K562 (cell line): ENCODE measurements at regions of chr4 and their contacts with region 1.

Region 1: GRCh38 chr4:138680989-138681604 is 334.5 kb upstream of the NOCT start:
- DNase-seq: peak; percentile 61 to 85 (median 68)
- ATAC-seq: peak; percentile 90
- H3K4me3 ChIP-seq: no peak overlapping the region
- H3K27ac ChIP-seq: no peak overlapping the region
- H3K4me1 ChIP-seq: peaks cover 0 to 3% of the 10 kb centered on the region in 2 experiments; a peak in 2 of 5 replicates
- H3K27me3 ChIP-seq: peaks cover 6 to 11% of the 10 kb centered on the region in 2 experiments
- CTCF ChIP-seq: peak; percentile 77 to 92 (median 79)
- EP300 ChIP-seq: no peak
- POLR2A ChIP-seq: no peak
- RAD21 ChIP-seq: peak; percentile 91 to 93

Region 2: GRCh38 chr4:137819964-137820383 is 861.1 kb before region 1 on chr4:
- CTCF ChIA-PET with region 1: no interaction called
- POLR2A ChIA-PET with region 1: no interaction called
- in situ Hi-C with region 1: no loop called
- intact Hi-C with region 1: loop called (anchors 2 kb)
- DNase-seq: peak in 2 of 4 experiments; percentile 6 to 22
- ATAC-seq: peak; percentile 78
- H3K4me3 ChIP-seq: no peak overlapping the region
- H3K27ac ChIP-seq: no peak overlapping the region
- H3K4me1 ChIP-seq: no peaks in the 10 kb centered on the region
- H3K27me3 ChIP-seq: no peaks in the 10 kb centered on the region
- CTCF ChIP-seq: peak; percentile 28 to 46 (median 29); a peak in 3 of 6 replicates
- EP300 ChIP-seq: no peak
- POLR2A ChIP-seq: no peak
- RAD21 ChIP-seq: peak; percentile 40 to 58

Region 3: DNA sequence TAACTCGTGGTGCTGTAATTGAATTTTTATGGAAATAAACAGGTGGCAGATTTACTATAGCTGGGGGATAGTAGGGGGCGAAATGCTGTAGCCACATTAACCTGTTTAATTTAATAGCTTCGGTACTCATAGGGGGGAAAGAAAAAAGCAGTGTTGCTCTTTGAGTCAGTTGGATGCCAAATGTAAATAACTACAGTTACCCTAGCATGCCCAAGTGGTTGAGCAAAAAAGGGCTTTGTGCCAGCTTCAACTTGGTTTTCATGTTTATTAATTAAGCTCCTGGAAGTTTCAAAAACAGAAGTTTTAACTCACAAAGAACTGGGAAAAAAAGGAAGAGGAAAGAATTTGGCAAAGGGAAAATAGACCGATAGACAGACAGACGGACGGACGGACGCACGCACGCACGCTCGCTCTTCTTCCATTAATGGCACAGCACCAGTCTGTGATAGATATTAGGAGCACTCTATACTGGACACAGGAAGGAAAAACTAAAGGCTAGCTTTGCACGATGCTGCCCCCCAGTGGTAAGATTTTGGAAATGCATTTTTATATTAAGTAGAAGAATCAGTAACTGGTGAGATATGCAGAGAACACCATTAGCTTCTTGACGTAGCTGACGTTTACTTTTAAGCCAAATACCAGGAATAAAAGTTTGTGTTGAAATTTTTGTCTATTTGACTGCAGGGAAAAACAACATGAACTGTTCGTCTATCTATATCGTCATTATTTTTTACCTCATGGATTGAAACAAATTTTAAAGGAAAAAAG is 590.8 kb before region 1 on chr4:
- CTCF ChIA-PET with region 1: no interaction called
- POLR2A ChIA-PET with region 1: no interaction called
- in situ Hi-C with region 1: no loop called
- intact Hi-C with region 1: loop called (anchors 5 kb)
- DNase-seq: peak; percentile 60 to 72 (median 64)
- ATAC-seq: peak; percentile 91
- H3K4me3 ChIP-seq: no peak overlapping the region
- H3K27ac ChIP-seq: no peak overlapping the region
- H3K4me1 ChIP-seq: no peaks in the 10 kb centered on the region
- H3K27me3 ChIP-seq: no peaks in the 10 kb centered on the region; a peak in 1 of 5 replicates
- CTCF ChIP-seq: peak; percentile 60 to 79 (median 72)
- EP300 ChIP-seq: no peak
- POLR2A ChIP-seq: no peak
- RAD21 ChIP-seq: peak; percentile 48 to 76

Region 4: GRCh38 chr4:138716559-138717335 is 35.6 kb after region 1 on chr4:
- CTCF ChIA-PET with region 1: no interaction called
- POLR2A ChIA-PET with region 1: no interaction called
- in situ Hi-C with region 1: no loop called
- intact Hi-C with region 1: no loop called
- DNase-seq: no peak
- ATAC-seq: no peak
- H3K4me3 ChIP-seq: no peak overlapping the region
- H3K27ac ChIP-seq: no peak overlapping the region
- H3K4me1 ChIP-seq: no peaks in the 10 kb centered on the region
- H3K27me3 ChIP-seq: no peaks in the 10 kb centered on the region; a peak in 1 of 5 replicates
- CTCF ChIP-seq: no peak
- EP300 ChIP-seq: no peak
- POLR2A ChIP-seq: no peak
- RAD21 ChIP-seq: no peak

Region 5: GRCh38 chr4:138835832-138836533 is 154.9 kb after region 1 on chr4:
- CTCF ChIA-PET with region 1: no interaction called
- POLR2A ChIA-PET with region 1: no interaction called
- in situ Hi-C with region 1: no loop called
- intact Hi-C with region 1: loop called (anchors 10 kb)
- DNase-seq: peak in 2 of 4 experiments; percentile 10 to 13
- ATAC-seq: peak; percentile 38; the same call in 1 of the 3 replicates
- H3K4me3 ChIP-seq: no peak overlapping the region
- H3K27ac ChIP-seq: no peak overlapping the region
- H3K4me1 ChIP-seq: no peaks in the 10 kb centered on the region
- H3K27me3 ChIP-seq: peaks cover 16% of the 10 kb centered on the region in 2 experiments; a peak in 4 of 5 replicates
- CTCF ChIP-seq: peak in 2 of 3 experiments; percentile 5 to 12; a peak in 1 of 6 replicates
- EP300 ChIP-seq: no peak
- POLR2A ChIP-seq: no peak
- RAD21 ChIP-seq: no peak

Region 6: GRCh38 chr4:138919094-138919936 is 238.2 kb after region 1 on chr4:
- CTCF ChIA-PET with region 1: no interaction called
- POLR2A ChIA-PET with region 1: no interaction called
- in situ Hi-C with region 1: no loop called
- intact Hi-C with region 1: loop called (anchors 2 kb)
- DNase-seq: peak; percentile 71 to 85 (median 80)
- ATAC-seq: peak; percentile 96
- H3K4me3 ChIP-seq: no peak overlapping the region
- H3K27ac ChIP-seq: no peak overlapping the region
- H3K4me1 ChIP-seq: no peaks in the 10 kb centered on the region; a peak in 2 of 5 replicates
- H3K27me3 ChIP-seq: no peaks in the 10 kb centered on the region
- CTCF ChIP-seq: peak; percentile 83 to 93 (median 93)
- EP300 ChIP-seq: no peak
- POLR2A ChIP-seq: no peak
- RAD21 ChIP-seq: peak; percentile 82 to 85

Region 7: GRCh38 chr4:139137763-139138162 is 456.7 kb after region 1 on chr4:
- CTCF ChIA-PET with region 1: no interaction called
- POLR2A ChIA-PET with region 1: no interaction called
- in situ Hi-C with region 1: no loop called
- intact Hi-C with region 1: no loop called
- DNase-seq: no peak
- ATAC-seq: no peak
- H3K4me3 ChIP-seq: no peak overlapping the region
- H3K27ac ChIP-seq: no peak overlapping the region
- H3K4me1 ChIP-seq: peaks cover 0 to 3% of the 10 kb centered on the region in 2 experiments; a peak in 1 of 5 replicates
- H3K27me3 ChIP-seq: no peaks in the 10 kb centered on the region
- CTCF ChIP-seq: no peak
- EP300 ChIP-seq: no peak
- POLR2A ChIP-seq: no peak
- RAD21 ChIP-seq: no peak